PC-9 (cell line): ENCODE measurements at regions of chr6 and their contacts with region 1.

Region 1: DNA sequence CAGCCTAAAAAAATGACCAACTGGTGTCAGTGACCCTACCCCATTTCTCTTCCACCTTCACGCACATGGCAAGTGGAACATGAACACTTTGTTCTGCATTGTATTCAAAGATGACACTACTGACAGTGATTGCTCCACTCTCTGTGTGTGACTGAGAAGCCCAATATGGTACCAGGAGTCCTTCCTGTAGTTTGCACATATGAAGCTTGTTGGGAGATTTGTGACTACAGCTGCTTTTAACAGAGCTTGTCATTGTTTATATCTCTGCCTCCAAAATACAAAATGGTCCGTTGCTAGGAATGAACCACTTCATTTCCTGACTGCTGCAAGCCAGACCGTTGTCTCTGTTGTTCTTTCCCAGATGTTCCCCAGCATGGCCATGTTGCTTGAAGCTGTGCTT is 140.3 kb upstream of the TCF21 start:
- DNase-seq: no peak
- H3K4me3 ChIP-seq: no peak overlapping the region
- H3K27ac ChIP-seq: no peak overlapping the region
- H3K4me1 ChIP-seq: peaks cover 21% of the 10 kb centered on the region
- H3K27me3 ChIP-seq: no peaks in the 10 kb centered on the region
- CTCF ChIP-seq: no peak

Region 2: DNA sequence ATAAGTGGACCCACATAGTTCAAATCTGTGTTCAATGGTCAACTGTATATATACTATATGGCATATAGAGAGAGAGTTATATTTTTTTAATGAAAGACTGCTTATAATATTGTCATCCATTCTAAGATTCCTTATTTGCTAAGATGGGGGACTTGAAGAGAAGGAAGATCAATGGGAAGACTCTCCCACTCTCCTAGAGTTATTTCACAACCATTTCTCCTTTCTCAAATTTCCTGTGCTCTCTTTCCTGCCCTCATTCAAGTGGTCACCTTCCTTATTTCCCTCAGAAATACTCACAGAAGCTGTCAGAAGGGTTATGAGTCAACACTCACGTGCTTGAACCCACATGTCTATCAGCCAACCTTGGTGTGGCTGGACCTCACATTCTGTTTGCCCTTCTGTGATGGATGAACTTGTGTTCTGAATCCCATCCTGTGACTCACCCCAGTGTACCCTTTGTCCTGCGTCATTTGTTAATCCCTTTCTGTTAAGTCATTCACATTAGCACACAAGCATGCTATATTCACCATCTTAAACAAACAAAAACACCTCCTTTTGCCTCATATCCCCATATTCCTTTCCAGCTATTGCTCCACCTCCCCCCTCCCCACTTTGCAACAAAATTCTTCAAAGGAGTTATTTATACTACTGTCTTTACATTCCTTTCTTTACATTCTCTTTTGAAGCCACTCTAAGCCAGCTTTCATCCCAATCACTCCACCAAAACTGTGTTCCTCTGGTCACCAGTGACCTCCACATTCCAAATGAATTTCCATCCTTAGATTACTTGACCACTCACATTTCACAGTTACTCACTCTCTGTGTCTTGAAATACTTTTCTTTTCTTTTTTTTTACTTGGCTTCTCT is 139.0 kb before region 1 on chr6:
- CTCF ChIA-PET with region 1: no interaction called
- POLR2A ChIA-PET with region 1: interaction called, 6 read pairs
- intact Hi-C with region 1: loop called (anchors 5 kb)
- DNase-seq: peak; percentile 62 to 96
- H3K4me3 ChIP-seq: no peak overlapping the region
- H3K27ac ChIP-seq: peak overlapping the region; percentile 87
- H3K4me1 ChIP-seq: peaks cover 28% of the 10 kb centered on the region
- H3K27me3 ChIP-seq: no peaks in the 10 kb centered on the region
- CTCF ChIP-seq: no peak

Region 3: GRCh38 chr6:133631421-133631820 is 117.2 kb before region 1 on chr6:
- CTCF ChIA-PET with region 1: no interaction called
- POLR2A ChIA-PET with region 1: no interaction called
- intact Hi-C with region 1: loop called (anchors 5 kb)
- DNase-seq: peak; percentile 24 to 56
- H3K4me3 ChIP-seq: no peak overlapping the region
- H3K27ac ChIP-seq: no peak overlapping the region
- H3K4me1 ChIP-seq: peaks cover 24% of the 10 kb centered on the region
- H3K27me3 ChIP-seq: no peaks in the 10 kb centered on the region
- CTCF ChIP-seq: no peak; the same call in 1 of the 2 replicates

Region 4: GRCh38 chr6:133764008-133764753 is 15.6 kb after region 1 on chr6:
- CTCF ChIA-PET with region 1: no interaction called
- POLR2A ChIA-PET with region 1: interaction called, 5 read pairs
- intact Hi-C with region 1: loop called (anchors 1 kb)
- DNase-seq: peak; percentile 43 to 61
- H3K4me3 ChIP-seq: no peak overlapping the region
- H3K27ac ChIP-seq: no peak overlapping the region
- H3K4me1 ChIP-seq: peaks cover 12% of the 10 kb centered on the region
- H3K27me3 ChIP-seq: no peaks in the 10 kb centered on the region
- CTCF ChIP-seq: no peak

Region 5: GRCh38 chr6:133774356-133774755 is 25.7 kb after region 1 on chr6:
- CTCF ChIA-PET with region 1: interaction called, 10 read pairs
- POLR2A ChIA-PET with region 1: no interaction called
- intact Hi-C with region 1: no loop called
- DNase-seq: no peak
- H3K4me3 ChIP-seq: no peak overlapping the region
- H3K27ac ChIP-seq: no peak overlapping the region
- H3K4me1 ChIP-seq: no peaks in the 10 kb centered on the region
- H3K27me3 ChIP-seq: no peaks in the 10 kb centered on the region
- CTCF ChIP-seq: no peak

Region 6: GRCh38 chr6:133837801-133838349 is 89.2 kb after region 1 on chr6:
- CTCF ChIA-PET with region 1: no interaction called
- POLR2A ChIA-PET with region 1: no interaction called
- intact Hi-C with region 1: loop called (anchors 5 kb)
- DNase-seq: peak; percentile 55 to 84
- H3K4me3 ChIP-seq: peak overlapping the region; percentile 61
- H3K27ac ChIP-seq: peak overlapping the region; percentile 76
- H3K4me1 ChIP-seq: no peaks in the 10 kb centered on the region; the same call in 1 of the 2 replicates
- H3K27me3 ChIP-seq: no peaks in the 10 kb centered on the region
- CTCF ChIP-seq: peak; percentile 98

Region 7: DNA sequence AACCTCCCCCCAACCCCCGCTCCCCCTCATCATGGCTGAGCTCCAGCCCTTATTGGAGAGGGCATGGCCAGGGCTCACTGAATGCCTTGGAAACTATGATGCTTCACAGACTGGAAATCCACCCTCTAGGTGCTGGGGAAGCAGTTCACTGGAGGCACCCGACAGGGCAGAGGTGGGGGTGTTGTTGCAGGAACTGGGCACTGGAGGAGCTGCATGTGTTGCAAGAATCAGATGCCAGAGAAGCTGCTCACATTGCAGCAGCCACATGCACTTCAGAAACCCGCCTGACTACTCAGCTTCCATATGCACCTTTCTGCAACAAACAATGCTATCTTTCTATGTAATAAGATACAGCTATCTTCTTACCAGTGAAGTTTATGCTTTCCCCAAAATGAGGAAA is 196.5 kb after region 1 on chr6:
- CTCF ChIA-PET with region 1: no interaction called
- POLR2A ChIA-PET with region 1: no interaction called
- intact Hi-C with region 1: no loop called
- DNase-seq: peak; percentile 5 to 61
- H3K4me3 ChIP-seq: no peak overlapping the region
- H3K27ac ChIP-seq: no peak overlapping the region
- H3K4me1 ChIP-seq: peaks cover 8% of the 10 kb centered on the region
- H3K27me3 ChIP-seq: no peaks in the 10 kb centered on the region
- CTCF ChIP-seq: no peak